ENCODE measurements at regions of chr18 and their contacts with region 1.

Region 1: DNA sequence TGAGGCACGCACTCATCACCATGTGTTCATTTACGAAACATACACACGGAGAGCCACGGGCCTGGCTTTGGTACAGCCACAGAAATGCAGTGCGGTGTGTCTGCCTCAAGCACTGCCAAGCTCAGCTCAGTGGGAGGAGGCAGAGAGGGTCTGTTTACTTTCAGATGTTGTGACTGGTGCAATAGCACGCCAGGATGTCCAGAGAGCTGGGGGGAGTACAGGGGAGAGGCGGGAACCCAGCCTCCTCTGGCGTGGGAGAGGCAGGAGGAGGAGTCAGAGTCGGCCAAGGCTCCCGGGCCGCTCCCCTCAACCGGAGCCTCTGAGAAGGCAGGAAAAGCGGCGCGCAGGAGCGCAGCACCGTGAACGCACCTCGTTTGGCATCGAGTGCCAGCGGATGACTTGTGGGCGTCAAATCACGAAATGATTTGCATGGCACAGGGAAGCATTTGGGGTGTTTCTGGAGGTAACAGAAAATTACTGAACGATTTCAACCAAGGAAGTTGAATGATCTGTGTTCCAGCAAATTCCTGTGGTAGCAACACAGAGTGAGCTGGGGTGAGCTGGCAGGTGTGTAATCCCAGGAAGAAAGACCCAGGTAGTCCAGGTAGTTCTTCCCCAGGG is 143.0 kb downstream of the ZNF516 start:
- DNase-seq: no peak
- ATAC-seq: peak; percentile 92

Region 2: DNA sequence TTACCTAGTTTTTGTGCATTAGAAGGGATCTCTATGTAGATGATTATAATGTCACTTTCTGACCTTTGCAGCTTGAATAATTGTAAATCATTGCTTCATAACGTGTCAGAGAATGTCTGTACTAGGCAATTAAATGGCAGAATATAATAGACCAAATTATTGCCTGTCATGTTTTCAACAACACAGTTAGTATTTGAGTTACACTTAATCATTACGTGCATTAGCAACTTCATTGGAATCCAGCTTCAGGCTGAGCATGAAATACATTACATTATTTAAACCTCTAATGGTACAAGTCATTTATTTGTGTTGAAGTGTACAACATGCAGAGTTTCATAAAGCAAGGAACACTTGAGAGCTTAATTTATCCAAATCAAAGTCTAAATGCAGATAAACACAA is 1706.4 kb before region 1 on chr18:
- intact Hi-C with region 1: loop called (anchors 10 kb)
- DNase-seq: no peak
- ATAC-seq: no peak

Region 3: GRCh38 chr18:76126327-76126726 is 225.7 kb before region 1 on chr18:
- intact Hi-C with region 1: no loop called
- DNase-seq: no peak
- ATAC-seq: peak; percentile 72